ENCODE measurements at regions of chr2 and their contacts with region 1.

Region 1: GRCh38 chr2:164992818-164993217 is 37.5 kb upstream of the SLC38A11 start:
- DNase-seq: peak; percentile 80
- ATAC-seq: peak; percentile 44
- H3K4me3 ChIP-seq: no peak overlapping the region
- H3K4me3 Mint-ChIP-seq: peak overlapping the region; percentile 64
- H3K27ac ChIP-seq: peak overlapping the region in 1 of 2 donors; percentile 69
- H3K27ac Mint-ChIP-seq: peak overlapping the region; percentile 83
- H3K4me1 ChIP-seq: peaks cover 33 to 38% of the 10 kb centered on the region in 2 donors
- H3K4me1 Mint-ChIP-seq: peaks cover 47% of the 10 kb centered on the region
- H3K27me3 ChIP-seq: no peaks in the 10 kb centered on the region
- H3K27me3 Mint-ChIP-seq: no peaks in the 10 kb centered on the region
- CTCF ChIP-seq: peak; percentile 78

Region 2: GRCh38 chr2:164737612-164738081 is 255.2 kb before region 1 on chr2:
- CTCF ChIA-PET with region 1: interaction called, 59 read pairs
- POLR2A ChIA-PET with region 1: no interaction called
- intact Hi-C with region 1: loop called (anchors 2 kb)
- DNase-seq: peak; percentile 86
- ATAC-seq: peak; percentile 68
- H3K4me3 ChIP-seq: peak overlapping the region in 1 of 5 experiments; percentile 1
- H3K4me3 Mint-ChIP-seq: peak overlapping the region; percentile 16
- H3K27ac ChIP-seq: no peak overlapping the region
- H3K27ac Mint-ChIP-seq: peak overlapping the region; percentile 16
- H3K4me1 ChIP-seq: peaks cover 24 to 40% of the 10 kb centered on the region in 2 donors
- H3K4me1 Mint-ChIP-seq: peaks cover 63% of the 10 kb centered on the region
- H3K27me3 ChIP-seq: no peaks in the 10 kb centered on the region
- H3K27me3 Mint-ChIP-seq: no peaks in the 10 kb centered on the region
- CTCF ChIP-seq: peak; percentile 91

Region 3: GRCh38 chr2:165015052-165015642 is 22.3 kb after region 1 on chr2:
- CTCF ChIA-PET with region 1: interaction called, 53 read pairs
- POLR2A ChIA-PET with region 1: interaction called, 4 read pairs
- intact Hi-C with region 1: no loop called
- DNase-seq: peak; percentile 70
- ATAC-seq: peak; percentile 44
- H3K4me3 ChIP-seq: no peak overlapping the region
- H3K4me3 Mint-ChIP-seq: no peak overlapping the region
- H3K27ac ChIP-seq: no peak overlapping the region
- H3K27ac Mint-ChIP-seq: peak overlapping the region; percentile 73
- H3K4me1 ChIP-seq: peaks cover 38 to 43% of the 10 kb centered on the region in 2 donors
- H3K4me1 Mint-ChIP-seq: peaks cover 10% of the 10 kb centered on the region
- H3K27me3 ChIP-seq: no peaks in the 10 kb centered on the region
- H3K27me3 Mint-ChIP-seq: peaks cover under 1% of the 10 kb centered on the region
- CTCF ChIP-seq: peak; percentile 84

Region 4: DNA sequence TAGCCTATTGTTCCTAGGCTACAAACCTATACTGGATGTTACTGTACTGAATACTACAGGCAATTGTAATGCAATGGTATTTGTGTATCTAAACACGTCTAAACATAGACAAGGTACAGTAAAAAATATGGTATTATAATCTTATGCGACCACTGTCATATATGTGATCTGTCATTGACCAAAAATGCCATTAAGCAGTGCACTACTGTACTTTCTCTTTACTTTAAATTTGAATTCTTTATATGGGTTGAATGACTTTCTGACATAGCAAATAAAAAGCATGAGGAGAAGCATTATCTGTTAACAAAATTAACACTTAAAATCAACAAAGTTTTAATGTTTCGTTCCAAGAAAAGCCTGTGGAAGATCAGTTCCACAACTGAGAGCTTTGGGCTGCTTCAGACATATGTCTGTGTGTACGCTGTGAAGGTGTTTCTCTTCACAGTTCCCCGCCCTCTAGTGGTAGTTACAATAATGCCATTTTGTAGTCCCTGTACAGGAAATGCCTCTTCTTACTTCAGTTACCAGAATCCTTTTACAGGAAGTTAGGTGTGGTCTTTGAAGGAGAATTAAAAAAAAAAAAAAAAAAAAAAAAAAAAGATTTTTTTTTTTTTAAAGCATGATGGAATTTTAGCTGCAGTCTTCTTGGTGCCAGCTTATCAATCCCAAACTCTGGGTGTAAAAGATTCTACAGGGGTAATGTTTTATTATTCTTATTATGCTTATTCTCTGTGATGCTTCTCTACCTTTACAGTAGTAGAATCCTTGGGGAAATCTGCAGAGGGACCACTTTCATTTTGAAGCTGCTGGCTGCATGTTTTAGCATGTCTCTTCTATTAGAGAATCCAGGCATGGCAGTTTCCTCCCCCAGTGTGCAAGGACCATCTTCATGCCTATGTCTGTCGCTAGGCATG is 300.9 kb after region 1 on chr2:
- CTCF ChIA-PET with region 1: interaction called, 8 read pairs
- POLR2A ChIA-PET with region 1: no interaction called
- intact Hi-C with region 1: loop called (anchors 1 kb)
- DNase-seq: peak; percentile 90
- ATAC-seq: peak; percentile 100
- H3K4me3 ChIP-seq: no peak overlapping the region
- H3K4me3 Mint-ChIP-seq: no peak overlapping the region
- H3K27ac ChIP-seq: no peak overlapping the region
- H3K27ac Mint-ChIP-seq: no peak overlapping the region
- H3K4me1 ChIP-seq: peaks cover 3 to 7% of the 10 kb centered on the region in 2 donors
- H3K4me1 Mint-ChIP-seq: peaks cover 3% of the 10 kb centered on the region
- H3K27me3 ChIP-seq: no peaks in the 10 kb centered on the region
- H3K27me3 Mint-ChIP-seq: peaks cover 9% of the 10 kb centered on the region
- CTCF ChIP-seq: peak; percentile 84

Region 5: GRCh38 chr2:165594935-165595255 is 602.1 kb after region 1 on chr2:
- CTCF ChIA-PET with region 1: no interaction called
- POLR2A ChIA-PET with region 1: no interaction called
- intact Hi-C with region 1: loop called (anchors 2 kb)
- DNase-seq: peak; percentile 77
- ATAC-seq: peak; percentile 92
- H3K4me3 ChIP-seq: peak overlapping the region in 1 of 5 experiments; percentile 24
- H3K4me3 Mint-ChIP-seq: peak overlapping the region; percentile 69
- H3K27ac ChIP-seq: no peak overlapping the region
- H3K27ac Mint-ChIP-seq: peak overlapping the region; percentile 39
- H3K4me1 ChIP-seq: peaks cover 11 to 24% of the 10 kb centered on the region in 2 donors
- H3K4me1 Mint-ChIP-seq: peaks cover 13% of the 10 kb centered on the region
- H3K27me3 ChIP-seq: peaks cover 0 to 3% (median 2%) of the 10 kb centered on the region in 4 experiments
- H3K27me3 Mint-ChIP-seq: peaks cover 3% of the 10 kb centered on the region
- CTCF ChIP-seq: no peak

Region 6: GRCh38 chr2:165874445-165875039 is 881.7 kb after region 1 on chr2:
- CTCF ChIA-PET with region 1: interaction called, 10 read pairs
- POLR2A ChIA-PET with region 1: no interaction called
- intact Hi-C with region 1: loop called (anchors 5 kb)
- DNase-seq: peak; percentile 79
- ATAC-seq: peak; percentile 91
- H3K4me3 ChIP-seq: no peak overlapping the region
- H3K4me3 Mint-ChIP-seq: peak overlapping the region; percentile 7
- H3K27ac ChIP-seq: peak overlapping the region in 1 of 2 donors; percentile 28
- H3K27ac Mint-ChIP-seq: peak overlapping the region; percentile 34
- H3K4me1 ChIP-seq: peaks cover 0 to 4% of the 10 kb centered on the region in 2 donors
- H3K4me1 Mint-ChIP-seq: peaks cover 3% of the 10 kb centered on the region
- H3K27me3 ChIP-seq: no peaks in the 10 kb centered on the region
- H3K27me3 Mint-ChIP-seq: no peaks in the 10 kb centered on the region
- CTCF ChIP-seq: peak; percentile 90

Region 7: GRCh38 chr2:166127217-166128155 is 1134.7 kb after region 1 on chr2 and contains the start of gene SCN1A:
- CTCF ChIA-PET with region 1: interaction called, 8 read pairs
- POLR2A ChIA-PET with region 1: no interaction called
- intact Hi-C with region 1: loop called (anchors 2 kb)
- DNase-seq: peak; percentile 57
- ATAC-seq: no peak
- H3K4me3 ChIP-seq: no peak within 1 kb of the TSS
- H3K4me3 Mint-ChIP-seq: no peak within 1 kb of the TSS
- H3K27ac ChIP-seq: no peak within 1 kb of the TSS
- H3K27ac Mint-ChIP-seq: no peak within 1 kb of the TSS
- H3K4me1 ChIP-seq: no peaks in the 10 kb centered on the region
- H3K4me1 Mint-ChIP-seq: peaks cover 2% of the 10 kb centered on the region
- H3K27me3 ChIP-seq: peaks cover 0 to 3% (median 1%) of the 10 kb centered on the region in 4 experiments
- H3K27me3 Mint-ChIP-seq: peaks cover 23% of the 10 kb centered on the region
- CTCF ChIP-seq: peak; percentile 86
- total RNA-seq, gene SCN1A: not detected in 2 replicates

Measured in B cell (primary cell).